ENCODE measurements at regions of chr12 and their contacts with region 1.

Region 1: GRCh38 chr12:47715393-47715876 is 9.6 kb upstream of the RPAP3 start:
- DNase-seq: peak; percentile 88

Region 2: DNA sequence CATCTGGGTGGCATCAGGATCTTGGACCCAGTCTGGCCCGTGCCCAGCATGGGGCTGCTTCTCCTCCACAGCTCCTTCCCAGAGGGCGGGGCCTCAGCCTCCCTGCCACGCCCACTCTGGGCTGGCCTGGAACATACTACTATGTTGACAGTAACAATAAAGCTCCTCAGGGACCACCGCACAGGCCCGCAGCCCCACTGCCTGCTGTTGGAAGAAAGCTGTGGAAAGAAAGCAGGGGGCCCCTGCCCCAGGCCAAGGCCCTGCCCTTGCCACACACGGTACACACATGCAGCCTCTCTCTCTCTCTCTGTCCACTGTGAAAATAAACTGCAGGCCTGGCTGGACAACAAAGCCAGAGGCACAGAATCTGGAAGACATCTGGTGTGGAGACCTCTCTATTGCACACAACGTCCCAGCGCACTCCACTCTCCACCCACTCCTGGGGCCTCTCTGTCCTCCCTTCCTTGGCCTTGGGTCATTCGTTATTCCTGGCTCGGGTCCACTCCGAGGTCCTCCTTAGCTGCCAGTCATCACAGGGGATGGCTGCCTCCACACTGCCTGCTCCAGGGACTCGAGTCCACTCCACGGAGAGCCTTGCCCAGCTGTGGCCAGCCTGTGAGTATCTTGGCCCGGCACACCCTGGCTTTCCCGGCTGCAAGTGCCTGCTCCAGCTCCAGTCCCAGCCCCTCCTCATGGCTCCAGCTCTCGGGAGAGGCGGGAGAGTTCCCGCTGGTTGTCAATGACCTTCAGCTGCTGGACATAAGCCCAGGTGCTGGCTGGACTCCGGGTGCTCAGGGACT is 21.6 kb after region 1 on chr12:
- intact Hi-C with region 1: loop called (anchors 1 kb)
- DNase-seq: peak; percentile 90

Region 3: GRCh38 chr12:47763481-47764346 is 48.3 kb after region 1 on chr12:
- intact Hi-C with region 1: loop called (anchors 1 kb)
- DNase-seq: no peak

Region 4: GRCh38 chr12:47779301-47779942 is 64.0 kb after region 1 on chr12:
- intact Hi-C with region 1: loop called (anchors 2 kb)
- DNase-seq: peak; percentile 94

Measured in cardiac septum (tissue), 1 donor.